ENCODE measurements at regions of chr10 and their contacts with region 1.

Region 1: DNA sequence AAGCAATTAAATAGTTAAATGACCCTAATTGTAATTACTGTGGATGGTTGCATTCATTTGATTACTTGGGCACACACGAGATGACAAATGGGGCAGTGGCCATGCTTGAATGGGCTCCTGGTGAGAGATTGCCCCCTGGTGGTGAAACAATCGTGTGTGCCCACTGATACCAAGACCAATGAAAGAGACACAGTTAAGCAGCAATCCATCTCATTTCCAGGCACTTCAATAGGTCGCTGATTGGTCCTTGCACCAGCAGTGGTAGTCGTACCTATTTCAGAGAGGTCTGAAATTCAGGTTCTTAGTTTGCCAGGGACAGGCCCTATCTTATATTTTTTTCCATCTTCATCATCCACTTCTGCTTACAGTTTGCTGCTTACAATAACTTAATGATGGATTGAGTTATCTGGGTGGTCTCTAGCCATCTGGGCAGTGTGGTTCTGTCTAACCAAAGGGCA is 8.3 kb downstream of the PCBD1 start:
- H3K4me3 ChIP-seq: no peak overlapping the region
- H3K27ac ChIP-seq: no peak overlapping the region
- H3K4me1 ChIP-seq: no peaks in the 10 kb centered on the region
- CTCF ChIP-seq: peak; percentile 69

Region 2: DNA sequence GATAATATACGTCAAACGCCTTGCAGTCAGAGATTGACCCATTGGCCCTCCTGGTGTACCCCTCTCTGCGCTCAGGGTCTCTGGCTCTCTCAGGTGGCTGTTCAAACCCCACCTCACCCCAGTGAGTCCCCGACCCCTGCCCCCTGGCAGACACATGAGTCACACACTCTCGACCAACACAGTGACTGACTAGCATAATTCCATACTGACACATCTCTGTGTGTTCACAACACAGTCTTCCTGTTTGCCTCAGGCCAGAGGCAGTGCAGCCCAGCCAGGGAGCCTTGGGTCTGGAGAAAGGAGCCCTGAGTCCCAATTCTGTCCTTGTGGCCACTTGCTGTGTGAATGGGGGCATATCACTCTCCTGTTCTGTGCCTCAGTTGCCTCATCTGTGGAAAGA is 361.4 kb before region 1 on chr10:
- CTCF ChIA-PET with region 1: no interaction called
- POLR2A ChIA-PET with region 1: interaction called, 14 read pairs
- H3K4me3 ChIP-seq: no peak overlapping the region
- H3K27ac ChIP-seq: no peak overlapping the region
- H3K4me1 ChIP-seq: no peaks in the 10 kb centered on the region; the same call in 1 of the 2 replicates
- CTCF ChIP-seq: no peak

Region 3: DNA sequence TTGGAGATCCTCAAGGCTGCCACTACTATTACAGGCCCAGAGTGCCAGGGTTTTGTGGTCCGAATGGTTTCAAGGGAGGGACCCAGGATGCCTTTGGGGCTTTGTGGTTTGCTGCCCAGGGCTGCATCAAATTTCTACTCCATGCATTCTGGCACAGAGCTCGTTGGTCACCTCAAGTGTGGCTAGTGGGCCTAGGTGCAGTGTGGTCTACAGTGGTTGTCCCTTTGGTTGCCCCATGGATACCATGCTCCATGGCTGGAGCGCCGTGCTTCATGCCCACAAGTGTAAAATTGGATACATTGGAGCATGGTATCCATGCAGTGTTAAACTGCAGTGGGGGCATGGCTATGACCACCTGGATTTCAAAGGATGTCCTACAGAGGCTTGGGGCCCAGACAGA is 272.2 kb before region 1 on chr10:
- CTCF ChIA-PET with region 1: no interaction called
- POLR2A ChIA-PET with region 1: no interaction called
- H3K4me3 ChIP-seq: no peak overlapping the region
- H3K27ac ChIP-seq: no peak overlapping the region
- H3K4me1 ChIP-seq: no peaks in the 10 kb centered on the region
- CTCF ChIP-seq: no peak

Region 4: DNA sequence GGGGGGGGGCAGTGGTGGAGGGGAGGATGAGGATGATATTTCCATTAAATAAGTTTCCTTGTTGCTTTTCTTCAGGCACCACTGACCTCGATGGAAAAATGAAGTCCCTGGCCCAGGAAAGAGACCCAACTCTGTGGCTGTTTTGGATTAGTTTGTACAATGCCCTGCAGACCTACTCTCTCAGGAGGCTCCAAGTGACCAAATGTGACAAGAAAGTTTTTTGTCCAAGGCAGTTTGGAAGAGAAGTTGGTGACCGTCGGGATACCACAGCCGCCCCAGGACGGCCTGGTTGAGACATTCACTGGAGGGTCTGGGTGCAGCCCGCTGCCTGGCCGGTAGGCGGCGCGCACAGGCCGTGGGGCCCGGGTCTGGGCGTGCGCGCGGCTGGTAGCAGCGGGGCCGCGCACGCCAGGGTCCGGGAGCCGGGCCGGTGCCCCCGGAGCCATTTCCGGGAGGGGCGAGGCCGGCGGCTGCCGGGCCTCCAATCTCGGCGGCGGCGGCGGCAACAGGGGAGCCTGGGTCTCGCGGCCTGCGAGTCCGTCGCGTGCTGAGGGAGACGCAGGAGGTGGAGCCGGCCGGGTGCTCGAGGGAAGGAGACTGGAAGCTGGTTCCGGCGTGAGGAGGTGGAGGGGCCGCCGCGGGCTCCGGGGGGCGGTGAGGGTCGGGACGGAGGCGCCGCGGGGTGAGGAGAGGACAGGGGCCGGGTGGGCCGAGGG is 64.4 kb before region 1 on chr10 and contains the start of gene SGPL1:
- CTCF ChIA-PET with region 1: interaction called, 20 read pairs
- POLR2A ChIA-PET with region 1: interaction called, 3 read pairs
- H3K4me3 ChIP-seq: peak within 1 kb of the TSS; percentile 82
- H3K27ac ChIP-seq: peak within 1 kb of the TSS; percentile 94
- H3K4me1 ChIP-seq: no peaks in the 10 kb centered on the region
- CTCF ChIP-seq: peak; percentile 59; the same call in 1 of the 2 replicates